GM10248 (cell line): ENCODE measurements at regions of chr9 and their contacts with region 1.

Region 1: GRCh38 chr9:98002808-98003207 is 19.7 kb downstream of the ANP32B start:
- DNase-seq: no peak
- CTCF ChIP-seq: no peak

Region 2: GRCh38 chr9:97857606-97858392 is 145.0 kb before region 1 on chr9:
- CTCF ChIA-PET with region 1: no interaction called
- POLR2A ChIA-PET with region 1: no interaction called
- DNase-seq: no peak
- CTCF ChIP-seq: no peak

Region 3: DNA sequence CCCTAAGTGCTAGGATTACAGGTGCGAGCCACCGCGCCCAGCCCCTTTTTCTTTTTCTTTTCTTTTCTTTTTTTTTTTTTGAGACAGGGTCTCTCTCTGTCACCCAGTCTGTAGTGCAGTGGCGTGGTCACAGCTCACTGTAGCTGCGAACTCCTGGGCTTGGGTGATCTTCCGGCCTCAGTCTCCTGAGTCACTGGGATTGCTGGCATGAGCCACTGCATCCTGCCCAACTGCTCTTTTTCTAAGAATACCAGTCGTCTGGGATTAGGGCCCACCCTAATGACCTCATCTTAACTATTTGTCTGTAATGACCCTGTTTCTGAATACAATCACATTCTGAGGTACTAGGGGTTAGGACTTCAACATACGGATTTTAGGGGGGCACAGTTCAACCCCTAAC is 19.6 kb after region 1 on chr9:
- CTCF ChIA-PET with region 1: interaction called, 10 read pairs
- POLR2A ChIA-PET with region 1: no interaction called
- DNase-seq: no peak
- CTCF ChIP-seq: no peak

Region 4: DNA sequence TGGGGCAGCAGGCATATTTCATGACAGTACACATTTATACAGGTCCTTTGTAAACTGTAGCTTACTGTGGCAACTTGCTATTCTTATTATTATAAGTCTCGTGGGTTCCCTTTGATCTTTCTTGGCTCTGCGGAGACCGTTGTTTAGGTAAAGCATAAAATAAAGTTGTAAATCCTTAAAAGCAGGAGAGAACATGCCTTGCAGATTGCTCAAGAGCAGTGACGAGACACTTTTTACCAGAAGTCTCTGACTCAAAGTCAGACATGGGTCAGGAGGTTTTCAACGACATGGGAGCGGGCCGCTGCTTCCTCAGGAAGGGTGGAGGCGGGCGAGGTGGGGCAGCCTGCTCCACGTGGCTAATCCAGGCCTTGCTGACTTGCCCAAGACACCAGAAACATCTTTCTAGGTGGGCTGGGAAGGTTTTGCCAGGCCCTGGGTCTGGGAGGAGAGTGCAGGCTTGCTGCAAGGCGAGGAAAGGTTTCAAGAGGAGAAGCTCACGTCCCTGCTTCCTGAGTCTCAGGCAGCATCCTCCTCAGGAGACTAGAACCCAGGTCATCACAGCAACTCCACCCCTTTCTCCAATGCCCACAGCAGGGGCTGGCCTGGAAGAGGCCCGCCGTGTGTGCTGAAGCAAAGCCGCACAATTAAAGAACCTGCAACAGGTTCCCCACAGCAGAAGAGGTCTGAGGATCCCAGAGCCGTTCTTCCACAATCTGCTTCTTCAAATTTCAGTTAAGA is 246.1 kb after region 1 on chr9:
- CTCF ChIA-PET with region 1: no interaction called
- POLR2A ChIA-PET with region 1: no interaction called
- DNase-seq: no peak
- CTCF ChIP-seq: no peak